Caco-2 (cell line): ENCODE measurements at regions of chr4 and their contacts with region 1.

Region 1: DNA sequence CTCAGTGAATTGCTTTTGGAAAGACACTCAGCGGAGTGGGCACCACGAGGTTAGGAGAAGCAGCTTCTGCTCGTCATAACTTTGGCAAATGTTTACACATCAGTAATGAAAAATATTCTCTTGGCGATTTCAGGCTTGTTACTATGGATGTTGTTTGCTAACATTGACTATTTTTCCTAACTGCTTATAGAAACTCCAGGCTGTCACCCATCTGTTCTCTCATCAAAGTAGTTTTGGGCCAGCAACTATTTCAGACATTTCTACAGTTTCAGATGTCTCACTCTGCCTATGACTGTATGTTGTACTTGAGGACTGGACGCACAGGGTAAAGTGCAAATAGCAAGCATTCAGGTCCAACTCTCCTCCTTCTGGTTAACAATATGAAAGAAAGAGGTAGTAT is 346.7 kb downstream of the TRIML1 start:
- DNase-seq: no peak
- H3K4me3 ChIP-seq: no peak overlapping the region
- H3K4me3 Mint-ChIP-seq: no peak overlapping the region
- H3K27ac Mint-ChIP-seq: no peak overlapping the region
- H3K4me1 ChIP-seq: no peaks in the 10 kb centered on the region
- H3K4me1 Mint-ChIP-seq: no peaks in the 10 kb centered on the region
- H3K27me3 ChIP-seq: no peaks in the 10 kb centered on the region
- H3K27me3 Mint-ChIP-seq: no peaks in the 10 kb centered on the region
- CTCF ChIP-seq: no peak

Region 2: DNA sequence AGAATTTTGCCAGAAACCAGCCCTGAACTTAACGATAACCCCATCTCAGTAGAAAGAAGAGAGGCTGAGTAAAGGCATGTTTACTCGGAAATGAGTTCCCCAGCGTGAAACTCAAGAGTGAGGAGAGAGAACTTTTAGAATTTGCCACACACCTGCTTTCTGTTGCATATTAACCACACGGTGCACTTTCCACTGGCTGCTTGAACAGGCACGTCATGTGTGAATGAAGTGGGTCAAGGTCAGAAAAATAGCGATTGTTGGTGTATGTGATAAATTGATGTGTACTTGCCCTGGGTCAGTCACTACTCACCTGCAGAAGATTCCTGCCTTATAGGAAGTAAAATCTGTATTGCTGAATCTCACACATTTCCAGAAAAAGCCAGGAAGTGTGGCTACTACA is 49.0 kb after region 1 on chr4:
- CTCF ChIA-PET with region 1: no interaction called
- POLR2A ChIA-PET with region 1: no interaction called
- intact Hi-C with region 1: loop called (anchors 1 kb)
- DNase-seq: no peak
- H3K4me3 ChIP-seq: no peak overlapping the region
- H3K4me3 Mint-ChIP-seq: no peak overlapping the region
- H3K27ac Mint-ChIP-seq: no peak overlapping the region
- H3K4me1 ChIP-seq: no peaks in the 10 kb centered on the region
- H3K4me1 Mint-ChIP-seq: no peaks in the 10 kb centered on the region
- H3K27me3 ChIP-seq: no peaks in the 10 kb centered on the region
- H3K27me3 Mint-ChIP-seq: no peaks in the 10 kb centered on the region
- CTCF ChIP-seq: no peak

Region 3: DNA sequence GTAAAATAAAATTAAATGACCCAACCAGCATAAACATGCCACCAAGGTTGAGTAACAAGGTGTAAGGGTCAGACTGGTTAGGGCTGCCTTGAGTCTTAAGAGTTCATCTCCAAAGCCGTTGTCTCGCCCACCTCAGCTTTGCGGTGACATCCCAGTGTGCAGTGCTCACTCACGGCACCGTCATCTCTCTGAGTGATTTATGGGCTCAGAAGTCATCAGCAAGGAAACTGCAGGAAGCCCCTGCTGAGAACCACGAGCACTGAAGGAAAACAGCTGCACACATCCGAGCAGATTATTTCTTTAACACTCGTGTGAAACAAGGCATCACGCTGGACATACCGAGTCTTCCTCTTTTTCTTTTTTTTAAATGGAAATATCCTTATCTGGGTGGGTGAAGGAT is 64.4 kb after region 1 on chr4:
- CTCF ChIA-PET with region 1: no interaction called
- POLR2A ChIA-PET with region 1: no interaction called
- intact Hi-C with region 1: no loop called
- DNase-seq: no peak
- H3K4me3 ChIP-seq: no peak overlapping the region
- H3K4me3 Mint-ChIP-seq: no peak overlapping the region
- H3K27ac Mint-ChIP-seq: no peak overlapping the region
- H3K4me1 ChIP-seq: no peaks in the 10 kb centered on the region
- H3K4me1 Mint-ChIP-seq: peaks cover 7% of the 10 kb centered on the region
- H3K27me3 ChIP-seq: no peaks in the 10 kb centered on the region
- H3K27me3 Mint-ChIP-seq: no peaks in the 10 kb centered on the region
- CTCF ChIP-seq: no peak

Region 4: GRCh38 chr4:188603646-188604045 is 117.7 kb after region 1 on chr4:
- CTCF ChIA-PET with region 1: no interaction called
- POLR2A ChIA-PET with region 1: no interaction called
- intact Hi-C with region 1: no loop called
- DNase-seq: no peak
- H3K4me3 ChIP-seq: no peak overlapping the region
- H3K4me3 Mint-ChIP-seq: no peak overlapping the region
- H3K27ac Mint-ChIP-seq: no peak overlapping the region
- H3K4me1 ChIP-seq: peaks cover 17% of the 10 kb centered on the region
- H3K4me1 Mint-ChIP-seq: peaks cover 8% of the 10 kb centered on the region
- H3K27me3 ChIP-seq: no peaks in the 10 kb centered on the region
- H3K27me3 Mint-ChIP-seq: no peaks in the 10 kb centered on the region
- CTCF ChIP-seq: no peak